Posterior vena cava (tissue), 2 donors: ENCODE measurements at regions of chr4 and their contacts with region 1.

Region 1: DNA sequence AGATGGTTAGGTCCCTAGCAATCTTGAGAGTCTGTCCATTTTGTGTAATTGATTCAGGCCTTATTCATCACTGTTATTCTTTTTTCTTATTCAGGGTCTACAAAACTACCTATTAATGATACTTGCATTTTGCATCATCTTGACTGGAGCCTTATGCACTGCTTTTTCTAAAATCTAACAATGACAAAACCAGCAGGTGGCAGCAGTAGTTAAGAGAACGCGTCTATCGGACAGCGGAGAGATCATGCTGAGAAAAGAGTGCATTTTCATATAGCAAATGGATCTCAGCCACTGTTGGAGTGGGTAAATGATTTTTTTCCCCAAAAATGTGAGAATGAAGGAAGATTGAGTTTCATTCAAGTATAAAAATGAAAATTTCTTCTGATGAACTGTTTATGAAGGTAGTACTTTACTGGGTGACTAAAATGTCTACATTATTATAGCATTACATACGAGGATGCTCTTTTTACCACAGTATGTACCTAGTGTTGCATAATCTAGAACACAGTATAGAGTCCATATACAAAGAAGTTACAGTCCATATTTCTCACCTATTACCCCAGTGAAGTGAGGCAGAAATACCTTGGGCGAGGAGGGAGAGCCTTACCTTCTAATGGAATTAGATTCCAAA is 43.2 kb downstream of the TMEM144 start:
- DNase-seq: no peak

Region 2: DNA sequence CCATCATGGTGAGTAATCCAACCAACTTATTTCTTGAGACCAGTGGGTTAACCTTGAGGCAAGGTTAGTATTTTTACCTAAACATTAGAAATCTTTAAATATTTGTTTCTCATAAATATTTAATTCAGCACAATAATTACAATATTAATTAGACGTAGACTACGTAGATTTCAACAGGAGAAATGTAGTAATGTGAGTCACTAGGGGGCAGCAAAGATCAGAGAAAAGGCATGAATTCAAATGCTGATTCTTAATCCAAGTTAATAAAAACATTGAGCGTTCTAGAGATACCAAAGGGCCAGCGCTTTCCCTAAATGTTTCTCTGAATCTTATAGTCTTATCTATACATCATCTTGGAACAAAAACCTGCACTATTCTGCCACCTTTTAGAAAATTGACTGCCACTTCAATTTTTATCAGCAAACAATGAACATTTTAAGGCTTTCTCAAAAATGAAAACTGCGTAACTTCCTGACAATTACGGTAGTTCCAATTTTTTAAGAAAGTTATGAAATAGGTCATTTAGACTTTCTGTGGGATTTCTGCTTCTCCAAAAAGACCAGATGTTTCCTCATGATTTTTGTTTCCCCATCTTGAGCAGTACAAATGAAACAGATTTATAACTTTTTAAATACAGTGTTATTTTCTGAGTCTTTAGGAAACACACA is 261.3 kb before region 1 on chr4:
- intact Hi-C with region 1: loop called in 1 of 2 experiments (anchors 2 kb)
- DNase-seq: no peak

Region 3: GRCh38 chr4:158182736-158183135 is 70.7 kb before region 1 on chr4:
- intact Hi-C with region 1: no loop called
- DNase-seq: peak; percentile 51

Region 4: DNA sequence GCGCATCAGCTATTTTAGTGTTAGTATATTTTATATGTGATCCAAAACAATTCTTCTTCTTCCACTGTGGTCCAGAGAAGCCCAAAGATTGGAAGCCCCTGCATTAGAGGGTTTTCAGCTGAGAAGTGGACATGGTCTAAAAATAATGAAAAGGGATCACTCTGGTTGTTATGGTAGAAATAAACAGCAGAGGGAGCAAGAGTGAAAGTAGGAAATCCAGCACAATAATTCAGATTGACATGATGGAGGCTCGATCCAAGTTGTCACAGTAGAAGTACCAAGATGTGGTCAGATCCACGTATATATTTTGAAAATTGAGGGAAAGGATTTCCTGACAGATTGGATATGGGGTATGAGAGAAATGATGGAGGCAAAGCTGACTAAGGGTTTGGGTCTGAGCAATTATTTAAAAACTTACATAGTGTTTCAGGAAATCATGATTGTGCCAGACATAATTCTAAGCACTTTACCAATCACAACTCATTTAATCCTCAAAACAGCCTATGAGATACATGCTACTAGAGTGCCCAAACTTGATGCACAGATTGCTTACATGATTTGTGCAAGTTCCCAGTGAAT is 60.2 kb before region 1 on chr4:
- intact Hi-C with region 1: loop called in 1 of 2 experiments (anchors 10 kb)
- DNase-seq: no peak

Region 5: DNA sequence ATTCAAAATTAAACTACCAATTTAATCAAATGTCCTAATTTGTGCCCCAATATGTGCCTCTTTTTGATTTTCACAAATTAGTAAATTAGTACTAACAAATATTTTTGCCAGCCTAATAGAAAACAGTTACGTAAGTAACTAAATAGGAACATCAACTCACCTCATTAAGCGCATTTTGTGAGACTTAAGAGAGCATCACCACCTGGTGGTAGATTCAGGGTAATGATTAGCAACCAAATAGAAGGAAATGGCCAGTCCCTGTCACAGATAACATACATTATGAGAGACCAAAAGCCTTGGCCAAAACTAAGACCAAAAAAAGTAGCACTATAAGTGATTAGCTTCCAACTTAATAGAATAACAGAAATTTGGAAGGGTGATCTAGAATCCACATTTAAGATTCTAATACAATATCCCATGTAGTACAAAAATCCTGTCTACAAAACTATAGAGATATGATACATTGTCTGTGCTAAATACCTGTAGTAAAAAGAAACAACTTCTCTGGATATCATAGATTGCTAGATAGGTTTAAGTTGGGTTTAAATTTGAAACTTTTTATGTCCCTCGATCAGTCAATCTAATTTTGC is 371.5 kb after region 1 on chr4:
- intact Hi-C with region 1: loop called (anchors 5 kb)
- DNase-seq: no peak